ENCODE measurements at regions of chr2 and their contacts with region 1.

Region 1: DNA sequence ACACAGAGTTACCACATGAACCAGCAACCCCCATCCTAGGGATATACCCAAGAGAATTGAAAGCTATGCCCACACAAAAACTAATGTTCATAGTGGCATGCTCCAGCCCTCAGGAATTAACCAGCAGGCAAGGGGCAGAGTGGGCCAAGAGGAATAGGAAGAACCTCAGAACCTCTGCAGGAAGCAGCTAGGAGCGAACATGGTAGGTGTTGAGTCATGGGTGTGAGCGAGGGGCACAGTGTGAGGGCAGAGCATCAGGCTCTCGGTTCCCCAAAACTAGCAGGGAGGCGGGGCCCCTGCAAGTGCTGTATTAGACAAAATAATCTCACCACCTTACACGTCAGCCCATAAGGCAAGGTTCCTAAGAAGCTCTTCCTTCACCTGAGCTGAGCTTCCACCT is 5.6 kb upstream of the RUFY4 start:
- DNase-seq: peak; percentile 60
- ATAC-seq: peak; percentile 94
- H3K4me3 ChIP-seq: no peak overlapping the region
- H3K27ac ChIP-seq: no peak overlapping the region
- H3K4me1 ChIP-seq: peaks cover 15% of the 10 kb centered on the region
- H3K27me3 ChIP-seq: no peaks in the 10 kb centered on the region; a peak in 1 of 4 replicates
- CTCF ChIP-seq: no peak
- EP300 ChIP-seq: no peak
- POLR2A ChIP-seq: no peak
- RAD21 ChIP-seq: no peak

Region 2: DNA sequence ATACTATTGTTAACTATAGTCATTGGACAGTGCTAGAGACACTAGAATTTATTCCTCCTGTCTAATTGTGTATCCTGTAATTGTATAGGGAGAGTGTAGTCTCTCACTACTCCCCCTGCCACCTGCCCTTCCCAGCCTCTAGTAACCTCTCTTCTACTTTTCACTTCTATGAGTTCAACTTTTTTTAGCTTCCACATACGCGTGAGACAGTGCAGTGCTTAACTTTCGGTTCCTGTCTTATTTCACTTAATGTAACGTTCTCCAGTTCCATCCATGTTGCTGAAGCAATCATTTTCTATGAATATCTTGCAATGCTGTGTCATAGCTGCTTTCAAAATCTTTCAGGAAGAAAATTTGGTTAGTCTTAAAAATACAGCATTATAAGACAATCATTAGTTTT is 17.2 kb before region 1 on chr2:
- CTCF ChIA-PET with region 1: interaction called, 3 read pairs
- POLR2A ChIA-PET with region 1: no interaction called
- RAD21 ChIA-PET with region 1: interaction called, 3 read pairs
- SMC1A ChIA-PET with region 1: interaction called, 13 read pairs
- in situ Hi-C with region 1: no loop called
- intact Hi-C with region 1: no loop called
- DNase-seq: peak; percentile 70
- ATAC-seq: peak; percentile 94
- H3K4me3 ChIP-seq: no peak overlapping the region
- H3K27ac ChIP-seq: peak overlapping the region; percentile 81
- H3K4me1 ChIP-seq: peaks cover 21% of the 10 kb centered on the region; the same call in 1 of the 2 replicates
- H3K27me3 ChIP-seq: no peaks in the 10 kb centered on the region
- CTCF ChIP-seq: no peak
- EP300 ChIP-seq: no peak
- POLR2A ChIP-seq: no peak
- RAD21 ChIP-seq: no peak